ENCODE measurements at regions of chr19 and their contacts with region 1.

Region 1: GRCh38 chr19:40425450-40426287 is at the start of gene SERTAD1:
- DNase-seq: peak; percentile 100
- ATAC-seq: peak; percentile 91 to 97 (median 94)
- H3K4me3 ChIP-seq: peak within 1 kb of the TSS; percentile 58 to 98 (median 91)
- H3K27ac ChIP-seq: peak within 1 kb of the TSS; percentile 92 to 100 (median 99)
- H3K4me1 ChIP-seq: peaks cover 0 to 44% (median 32%) of the 10 kb centered on the region in 12 donors
- H3K27me3 ChIP-seq: no peaks in the 10 kb centered on the region
- CTCF ChIP-seq: peak in 11 of 12 donors; percentile 69 to 95 (median 81)
- POLR2A ChIP-seq: peak; percentile 89 to 100
- total RNA-seq, gene SERTAD1: 7.6 to 28.0 (median 11.5) TPM

Region 2: GRCh38 chr19:40348125-40348913 is 77.3 kb before region 1 on chr19 and contains the starts of genes C19orf47 and PLD3:
- intact Hi-C with region 1: loop called in 2 of 10 experiments (anchors 5 to 10 kb)
- DNase-seq: peak; percentile 100
- ATAC-seq: peak; percentile 97 to 98 (median 98)
- H3K4me3 ChIP-seq: peak within 1 kb of the TSS; percentile 59 to 98 (median 82)
- H3K27ac ChIP-seq: peak within 1 kb of the TSS; percentile 67 to 88 (median 84)
- H3K4me1 ChIP-seq: peaks cover 0 to 34% (median 20%) of the 10 kb centered on the region in 12 donors
- H3K27me3 ChIP-seq: no peaks in the 10 kb centered on the region
- CTCF ChIP-seq: no peak
- POLR2A ChIP-seq: peak in 1 of 2 donors; percentile 86
- total RNA-seq, gene C19orf47: 99.1 to 230 (median 148) TPM
- total RNA-seq, gene PLD3: 138 to 375 (median 183) TPM

Region 3: GRCh38 chr19:40465557-40466150 is 40.0 kb after region 1 on chr19 and contains the start of gene BLVRB:
- intact Hi-C with region 1: loop called in 2 of 10 experiments (anchors 2 kb)
- DNase-seq: peak; percentile 99 to 100 (median 99)
- ATAC-seq: peak; percentile 96 to 97 (median 97)
- H3K4me3 ChIP-seq: peak within 1 kb of the TSS; percentile 50 to 85 (median 78)
- H3K27ac ChIP-seq: peak within 1 kb of the TSS; percentile 28 to 96 (median 86)
- H3K4me1 ChIP-seq: peaks cover 0 to 55% (median 19%) of the 10 kb centered on the region in 12 donors
- H3K27me3 ChIP-seq: peaks cover 0 to 12% (median 0%) of the 10 kb centered on the region in 9 donors
- CTCF ChIP-seq: no peak
- POLR2A ChIP-seq: peak; percentile 28 to 90
- total RNA-seq, gene BLVRB: 76.3 to 330 (median 100) TPM

Region 4: DNA sequence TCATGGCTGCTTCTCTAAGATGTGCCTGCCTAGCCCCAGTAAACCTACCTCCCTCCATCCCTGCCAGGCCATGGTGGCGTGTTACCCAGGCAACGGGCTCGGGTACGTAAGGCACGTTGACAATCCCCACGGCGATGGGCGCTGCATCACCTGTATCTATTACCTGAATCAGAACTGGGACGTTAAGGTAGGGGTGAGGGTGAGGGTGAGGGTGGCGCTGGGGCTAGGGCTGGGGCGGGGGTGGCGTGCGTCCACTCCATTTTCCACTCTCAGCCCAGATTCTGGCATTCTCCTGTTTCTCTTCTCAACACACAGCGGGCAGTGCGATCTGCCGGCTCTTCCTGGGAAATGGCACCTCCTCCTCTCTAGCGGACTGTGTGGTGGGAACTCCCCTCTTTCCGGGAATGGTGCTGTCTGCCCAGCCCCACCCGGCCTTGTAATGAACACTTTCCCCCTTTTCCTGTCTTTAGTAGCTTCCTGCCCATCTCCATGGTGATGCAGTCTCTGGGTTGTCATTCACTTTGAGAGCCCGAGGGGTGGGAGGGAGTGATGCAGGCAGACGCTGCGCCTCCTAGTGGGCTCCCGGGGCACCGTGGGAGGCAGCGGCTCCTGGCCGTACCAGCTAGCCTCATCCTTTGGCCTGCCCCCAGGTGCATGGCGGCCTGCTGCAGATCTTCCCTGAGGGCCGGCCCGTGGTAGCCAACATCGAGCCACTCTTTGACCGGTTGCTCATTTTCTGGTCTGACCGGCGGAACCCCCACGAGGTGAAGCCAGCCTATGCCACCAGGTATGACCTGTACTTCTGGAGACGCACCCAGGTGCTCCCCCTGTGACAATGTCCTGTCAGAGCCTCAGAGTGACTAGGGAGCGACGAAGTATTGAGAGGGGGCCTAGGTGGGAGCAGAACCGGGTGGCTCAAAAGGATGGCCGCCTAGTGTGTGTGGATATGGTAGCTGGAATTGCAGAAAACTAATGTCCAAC is 381.1 kb after region 1 on chr19:
- intact Hi-C with region 1: loop called in 2 of 10 experiments (anchors 5 to 10 kb)
- DNase-seq: peak; percentile 84 to 90 (median 87)
- ATAC-seq: peak; percentile 38 to 64 (median 48)
- H3K4me3 ChIP-seq: peak overlapping the region in 9 of 12 donors; percentile 1 to 38 (median 20)
- H3K27ac ChIP-seq: peak overlapping the region; percentile 13 to 99 (median 97)
- H3K4me1 ChIP-seq: peaks cover 42 to 96% (median 82%) of the 10 kb centered on the region in 12 donors
- H3K27me3 ChIP-seq: no peaks in the 10 kb centered on the region
- CTCF ChIP-seq: peak; percentile 75 to 95 (median 86)
- POLR2A ChIP-seq: peak in 1 of 2 donors; percentile 33